Mammary epithelial cell (primary cell): ENCODE measurements at regions of chr2 and their contacts with region 1.

Region 1: GRCh38 chr2:61538200-61538919 is at the start of gene XPO1:
- DNase-seq: peak; percentile 99
- H3K4me3 ChIP-seq: peak within 1 kb of the TSS; percentile 63 to 99 (median 97)
- H3K27ac ChIP-seq: peak within 1 kb of the TSS; percentile 91
- H3K4me1 ChIP-seq: peaks cover 14% of the 10 kb centered on the region
- H3K27me3 ChIP-seq: no peaks in the 10 kb centered on the region
- CTCF ChIP-seq: no peak
- total RNA-seq, gene XPO1: 96.7 to 127 TPM

Region 2: DNA sequence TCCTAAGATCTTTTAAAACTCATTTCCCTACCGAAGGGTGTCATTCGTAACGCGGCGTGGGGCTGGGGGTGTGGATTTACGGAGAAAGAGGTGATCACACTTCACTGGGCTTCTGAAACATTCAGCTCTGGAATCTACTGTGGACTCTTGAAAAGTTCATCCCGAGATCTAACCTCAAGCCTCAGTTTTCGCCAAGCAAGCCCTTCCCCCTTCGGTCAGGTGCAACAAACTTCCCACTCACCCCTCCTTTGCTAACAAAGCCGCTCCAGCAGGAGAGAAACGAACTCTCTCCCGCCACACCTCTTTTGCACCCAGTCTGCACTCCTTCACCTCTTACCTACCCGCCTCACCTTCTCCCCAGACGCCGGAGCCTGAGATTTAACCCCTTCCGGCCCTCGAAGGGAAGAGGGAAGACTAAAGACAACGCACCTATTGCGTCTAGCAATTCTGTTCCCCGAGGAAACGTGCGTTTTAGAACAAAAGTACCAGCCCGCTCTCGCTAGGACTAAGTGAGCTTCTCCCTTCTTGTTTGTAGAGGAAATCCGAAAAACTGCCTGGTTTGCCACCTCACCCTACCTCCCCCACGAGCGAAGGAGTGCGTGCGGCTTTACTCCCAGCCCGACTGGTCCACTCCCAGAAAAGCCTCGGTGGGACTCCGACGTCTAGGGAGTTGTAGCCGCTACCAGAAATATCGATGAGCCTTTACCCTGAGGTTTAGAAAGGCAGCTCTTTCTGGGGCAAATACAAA is 521.4 kb before region 1 on chr2:
- CTCF ChIA-PET with region 1: no interaction called
- dilution Hi-C with region 1: no loop called
- in situ Hi-C with region 1: no loop called
- intact Hi-C with region 1: loop called (anchors 2 kb)
- DNase-seq: peak; percentile 94
- H3K4me3 ChIP-seq: peak overlapping the region; percentile 71 to 96 (median 79)
- H3K27ac ChIP-seq: peak overlapping the region; percentile 85
- H3K4me1 ChIP-seq: peaks cover 14% of the 10 kb centered on the region
- H3K27me3 ChIP-seq: no peaks in the 10 kb centered on the region
- CTCF ChIP-seq: no peak

Region 3: DNA sequence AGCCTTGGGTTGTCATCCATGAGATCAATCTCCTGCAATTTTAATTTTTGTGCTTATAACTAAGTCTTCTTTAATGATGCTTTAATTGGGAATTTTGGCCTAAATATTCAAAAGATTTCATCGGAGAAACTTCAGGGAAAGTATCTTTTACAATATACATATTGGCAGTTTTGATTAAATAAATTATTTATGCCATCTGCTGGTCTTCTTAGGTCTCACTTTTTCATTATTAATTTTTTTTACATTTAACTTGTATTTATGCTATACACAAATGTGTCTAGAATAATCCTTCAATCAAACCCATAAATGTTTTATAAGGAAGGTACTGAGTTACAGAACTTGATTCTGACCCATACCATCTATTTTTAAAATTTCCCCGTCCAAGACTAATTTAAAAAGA is 94.9 kb after region 1 on chr2:
- CTCF ChIA-PET with region 1: no interaction called
- dilution Hi-C with region 1: no loop called
- in situ Hi-C with region 1: no loop called
- intact Hi-C with region 1: loop called (anchors 2 kb)
- DNase-seq: no peak
- H3K4me3 ChIP-seq: no peak overlapping the region
- H3K27ac ChIP-seq: no peak overlapping the region
- H3K4me1 ChIP-seq: no peaks in the 10 kb centered on the region
- H3K27me3 ChIP-seq: no peaks in the 10 kb centered on the region
- CTCF ChIP-seq: no peak

Region 4: GRCh38 chr2:61764035-61764800 is 225.9 kb after region 1 on chr2:
- CTCF ChIA-PET with region 1: no interaction called
- dilution Hi-C with region 1: no loop called
- in situ Hi-C with region 1: no loop called
- intact Hi-C with region 1: loop called (anchors 1 kb)
- DNase-seq: peak; percentile 99
- H3K4me3 ChIP-seq: peak overlapping the region; percentile 65 to 75 (median 67)
- H3K27ac ChIP-seq: peak overlapping the region; percentile 99
- H3K4me1 ChIP-seq: peaks cover 8% of the 10 kb centered on the region
- H3K27me3 ChIP-seq: no peaks in the 10 kb centered on the region
- CTCF ChIP-seq: no peak

Region 5: GRCh38 chr2:61789807-61790602 is 251.6 kb after region 1 on chr2:
- CTCF ChIA-PET with region 1: no interaction called
- dilution Hi-C with region 1: no loop called
- in situ Hi-C with region 1: no loop called
- intact Hi-C with region 1: loop called (anchors 2 kb)
- DNase-seq: peak; percentile 83
- H3K4me3 ChIP-seq: no peak overlapping the region
- H3K27ac ChIP-seq: no peak overlapping the region
- H3K4me1 ChIP-seq: peaks cover 4% of the 10 kb centered on the region
- H3K27me3 ChIP-seq: no peaks in the 10 kb centered on the region
- CTCF ChIP-seq: no peak

Region 6: GRCh38 chr2:61854474-61855182 is 316.3 kb after region 1 on chr2:
- CTCF ChIA-PET with region 1: no interaction called
- dilution Hi-C with region 1: no loop called
- in situ Hi-C with region 1: no loop called
- intact Hi-C with region 1: loop called (anchors 2 kb)
- DNase-seq: peak; percentile 95
- H3K4me3 ChIP-seq: peak overlapping the region; percentile 76 to 82 (median 76)
- H3K27ac ChIP-seq: peak overlapping the region; percentile 79
- H3K4me1 ChIP-seq: peaks cover 8% of the 10 kb centered on the region
- H3K27me3 ChIP-seq: no peaks in the 10 kb centered on the region
- CTCF ChIP-seq: peak in 1 of 2 donors; percentile 3

Region 7: DNA sequence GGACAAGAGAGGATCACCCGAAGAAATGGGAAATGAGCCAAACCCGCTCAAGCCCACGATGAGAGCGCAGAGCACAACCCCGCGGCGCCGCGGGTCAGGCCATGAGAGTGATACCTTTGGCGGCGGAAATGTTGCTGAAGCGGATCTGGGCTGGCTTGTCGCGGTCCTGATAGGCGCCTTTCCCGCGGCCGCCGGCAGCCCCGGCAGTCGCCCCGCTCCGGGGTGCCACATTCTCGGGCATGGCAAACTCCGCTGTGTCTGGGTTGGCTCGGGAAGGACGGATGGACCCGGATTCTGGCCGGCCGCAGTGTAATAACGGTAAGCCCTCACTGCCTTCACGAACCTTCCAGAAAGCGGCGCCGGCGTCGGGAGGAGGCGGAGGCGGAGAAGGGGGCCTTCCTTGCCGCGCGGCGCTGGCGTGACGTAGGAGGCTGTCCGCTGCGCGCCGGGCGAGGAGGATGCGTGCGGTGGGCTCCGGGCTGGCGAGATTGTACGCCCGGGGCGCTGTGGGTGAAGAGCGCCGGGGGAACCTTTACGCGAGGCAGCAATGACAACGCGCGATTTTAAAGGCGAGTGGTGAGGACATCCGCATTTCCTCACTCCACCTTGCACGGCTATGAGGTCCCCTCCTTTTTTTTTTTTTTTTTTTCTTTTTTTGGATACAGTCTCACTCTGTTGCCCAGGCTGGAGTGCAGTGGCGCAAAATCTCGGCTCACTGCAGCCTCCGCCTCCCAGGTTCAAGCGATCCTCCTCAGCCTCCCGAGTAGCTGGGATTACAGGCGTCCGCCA is 350.1 kb after region 1 on chr2 and contains the start of gene CCT4:
- CTCF ChIA-PET with region 1: no interaction called
- dilution Hi-C with region 1: no loop called
- in situ Hi-C with region 1: loop called in 1 of 2 experiments (anchors 25 kb)
- intact Hi-C with region 1: loop called (anchors 10 kb)
- DNase-seq: peak; percentile 80
- H3K4me3 ChIP-seq: peak within 1 kb of the TSS; percentile 83 to 97 (median 94)
- H3K27ac ChIP-seq: peak within 1 kb of the TSS; percentile 96
- H3K4me1 ChIP-seq: peaks cover 17% of the 10 kb centered on the region
- H3K27me3 ChIP-seq: no peaks in the 10 kb centered on the region
- CTCF ChIP-seq: no peak
- total RNA-seq, gene CCT4: 117 to 205 TPM

Region 8: GRCh38 chr2:61949714-61950560 is 411.6 kb after region 1 on chr2:
- CTCF ChIA-PET with region 1: no interaction called
- dilution Hi-C with region 1: no loop called
- in situ Hi-C with region 1: no loop called
- intact Hi-C with region 1: no loop called
- DNase-seq: peak; percentile 46
- H3K4me3 ChIP-seq: peak overlapping the region in 1 of 3 experiments; percentile 10
- H3K27ac ChIP-seq: peak overlapping the region; percentile 82
- H3K4me1 ChIP-seq: peaks cover 28% of the 10 kb centered on the region
- H3K27me3 ChIP-seq: no peaks in the 10 kb centered on the region
- CTCF ChIP-seq: no peak